SK-N-SH (cell line): ENCODE measurements at regions of chr19 and their contacts with region 1.

Region 1: DNA sequence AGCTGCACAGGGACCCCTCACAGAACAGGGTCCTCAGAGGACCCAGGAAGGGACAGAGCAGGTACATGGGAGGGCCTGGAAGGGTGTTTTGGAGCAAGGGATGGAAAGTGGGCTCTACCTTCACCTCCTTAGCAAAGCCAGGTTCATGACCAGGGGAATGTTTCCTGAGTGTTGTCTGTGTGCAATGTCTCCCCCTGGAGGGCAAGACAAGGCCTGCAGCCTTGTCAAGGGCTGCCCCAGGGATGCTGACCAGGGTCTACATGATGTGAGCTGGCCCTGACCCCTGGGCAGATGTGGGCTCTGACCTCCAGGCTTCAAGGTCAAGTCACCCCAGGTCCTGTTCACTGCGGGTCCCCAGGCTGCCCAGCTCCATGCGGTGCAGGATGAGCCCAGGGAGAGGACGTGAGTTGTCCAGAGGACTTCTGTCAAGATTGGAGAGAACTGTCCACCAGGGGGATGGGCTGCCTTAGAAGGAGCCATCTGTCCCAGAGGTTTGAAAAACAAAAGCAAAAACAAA is 1.0 kb upstream of the CEACAM1 start:
- DNase-seq: peak; percentile 77
- H3K4me3 ChIP-seq: no peak overlapping the region; a peak in 1 of 4 replicates
- H3K27ac ChIP-seq: no peak overlapping the region
- H3K4me1 ChIP-seq: no peaks in the 10 kb centered on the region; a peak in 1 of 4 replicates
- H3K27me3 ChIP-seq: no peaks in the 10 kb centered on the region
- CTCF ChIP-seq: peak; percentile 86
- EP300 ChIP-seq: no peak
- RAD21 ChIP-seq: peak; percentile 79

Region 2: GRCh38 chr19:42440357-42441048 is 88.8 kb before region 1 on chr19:
- CTCF ChIA-PET with region 1: interaction called, 24 read pairs
- POLR2A ChIA-PET with region 1: no interaction called
- DNase-seq: peak; percentile 59
- H3K4me3 ChIP-seq: no peak overlapping the region
- H3K27ac ChIP-seq: no peak overlapping the region
- H3K4me1 ChIP-seq: no peaks in the 10 kb centered on the region
- H3K27me3 ChIP-seq: no peaks in the 10 kb centered on the region
- CTCF ChIP-seq: peak; percentile 94
- EP300 ChIP-seq: no peak
- RAD21 ChIP-seq: peak; percentile 22; the same call in 1 of the 2 replicates

Region 3: DNA sequence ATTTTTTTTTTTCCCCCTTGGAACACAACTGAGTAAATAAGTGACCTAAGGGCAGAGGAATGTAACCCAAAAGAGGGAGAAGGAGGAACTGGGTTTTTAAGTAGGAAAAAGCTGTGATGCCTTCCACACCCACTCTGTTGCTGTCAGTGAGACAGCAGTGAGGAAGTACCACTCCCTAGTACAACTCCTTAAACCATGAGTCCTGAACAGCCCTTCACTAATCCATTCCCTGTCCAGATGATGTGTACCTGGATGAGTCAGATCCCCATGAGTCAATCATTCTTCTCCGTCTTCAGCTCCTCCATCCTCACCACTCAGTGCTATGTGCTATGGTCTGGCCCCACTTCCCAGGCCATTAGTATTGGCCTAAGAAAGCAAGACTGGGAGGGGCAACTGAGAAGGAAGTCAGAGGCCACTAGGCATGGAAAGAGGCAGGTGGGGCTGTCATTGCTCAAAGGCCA is 73.7 kb before region 1 on chr19:
- CTCF ChIA-PET with region 1: interaction called, 86 read pairs
- POLR2A ChIA-PET with region 1: interaction called, 4 read pairs
- DNase-seq: no peak
- H3K4me3 ChIP-seq: no peak overlapping the region
- H3K27ac ChIP-seq: no peak overlapping the region
- H3K4me1 ChIP-seq: no peaks in the 10 kb centered on the region
- H3K27me3 ChIP-seq: no peaks in the 10 kb centered on the region; the same call in 1 of the 2 replicates
- CTCF ChIP-seq: no peak
- EP300 ChIP-seq: no peak
- RAD21 ChIP-seq: no peak

Region 4: DNA sequence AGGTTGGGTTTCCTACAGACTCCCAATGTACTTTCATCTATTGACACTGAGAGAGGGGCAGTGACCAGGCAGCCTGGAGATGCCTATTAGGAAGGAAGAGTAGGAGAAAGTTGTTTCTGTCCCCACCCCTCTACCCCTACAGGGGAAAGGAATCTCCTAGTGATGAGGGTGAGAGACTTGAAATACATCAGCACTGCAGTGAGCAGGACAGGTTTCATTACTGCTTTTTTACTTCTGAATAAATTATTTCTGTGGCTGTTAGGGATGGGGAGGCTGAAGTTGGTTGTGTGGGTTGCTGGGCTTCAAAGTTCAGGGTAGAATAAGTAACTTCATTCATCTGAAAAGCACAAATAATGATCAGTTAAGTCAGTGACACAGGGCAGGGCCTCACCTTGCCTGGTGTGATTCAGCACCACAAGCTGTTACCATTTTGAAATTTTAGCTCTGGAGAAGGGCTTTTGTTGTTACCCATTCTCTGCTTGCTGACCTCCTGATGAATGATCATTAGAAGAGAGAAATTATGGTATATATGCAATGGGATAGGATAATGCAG is 20.3 kb before region 1 on chr19:
- CTCF ChIA-PET with region 1: interaction called, 49 read pairs
- POLR2A ChIA-PET with region 1: no interaction called
- DNase-seq: no peak
- H3K4me3 ChIP-seq: no peak overlapping the region
- H3K27ac ChIP-seq: no peak overlapping the region
- H3K4me1 ChIP-seq: no peaks in the 10 kb centered on the region
- H3K27me3 ChIP-seq: no peaks in the 10 kb centered on the region
- CTCF ChIP-seq: no peak
- EP300 ChIP-seq: no peak
- RAD21 ChIP-seq: no peak

Region 5: DNA sequence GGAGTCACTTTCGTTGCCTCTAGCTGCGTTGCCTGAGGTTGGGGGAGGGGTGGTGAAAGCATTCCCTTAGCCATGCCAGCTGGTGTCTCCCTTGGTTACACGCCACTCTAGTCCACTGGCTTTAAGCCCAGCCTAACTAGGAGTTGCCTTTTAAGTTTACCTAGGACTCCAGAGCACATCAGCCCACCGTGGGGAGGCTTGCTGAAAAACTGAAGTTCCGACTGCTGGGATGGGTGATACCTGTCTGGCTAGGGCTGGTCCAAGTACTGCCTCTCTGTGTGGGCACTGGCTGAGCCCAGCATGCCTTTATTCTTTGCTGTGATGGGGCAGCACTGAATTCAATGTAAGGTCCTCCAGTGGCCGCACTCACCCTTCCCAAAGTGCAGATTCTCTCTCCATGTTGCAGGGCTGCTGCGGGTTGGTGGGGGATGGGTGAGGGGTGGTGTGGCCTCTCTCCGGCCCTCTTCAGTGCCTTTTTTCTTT is 10.8 kb after region 1 on chr19:
- CTCF ChIA-PET with region 1: interaction called, 15 read pairs
- POLR2A ChIA-PET with region 1: no interaction called
- DNase-seq: no peak
- H3K4me3 ChIP-seq: no peak overlapping the region
- H3K27ac ChIP-seq: no peak overlapping the region
- H3K4me1 ChIP-seq: no peaks in the 10 kb centered on the region
- H3K27me3 ChIP-seq: peaks cover 5% of the 10 kb centered on the region; the same call in 1 of the 2 replicates
- CTCF ChIP-seq: no peak
- EP300 ChIP-seq: no peak
- RAD21 ChIP-seq: no peak

Region 6: GRCh38 chr19:42794765-42795164 is 265.5 kb after region 1 on chr19:
- CTCF ChIA-PET with region 1: no interaction called
- POLR2A ChIA-PET with region 1: no interaction called
- DNase-seq: no peak
- H3K4me3 ChIP-seq: no peak overlapping the region
- H3K27ac ChIP-seq: no peak overlapping the region
- H3K4me1 ChIP-seq: no peaks in the 10 kb centered on the region
- H3K27me3 ChIP-seq: no peaks in the 10 kb centered on the region
- CTCF ChIP-seq: no peak
- EP300 ChIP-seq: no peak
- RAD21 ChIP-seq: no peak